ENCODE measurements at regions of chr13 and their contacts with region 1.

Region 1: GRCh38 chr13:27449936-27450828 is at the start of gene MTIF3:
- DNase-seq: peak; percentile 95 to 99 (median 97)
- ATAC-seq: peak; percentile 83 to 90 (median 85)
- H3K4me3 ChIP-seq: peak within 1 kb of the TSS; percentile 95 to 97
- H3K4me3 Mint-ChIP-seq: peak within 1 kb of the TSS; percentile 89 to 95 (median 94)
- H3K27ac ChIP-seq: peak within 1 kb of the TSS; percentile 97
- H3K27ac Mint-ChIP-seq: peak within 1 kb of the TSS; percentile 98 to 99
- H3K4me1 ChIP-seq: peaks cover 31 to 48% of the 10 kb centered on the region in 2 experiments
- H3K4me1 Mint-ChIP-seq: peaks cover 61 to 67% (median 62%) of the 10 kb centered on the region in 3 donors
- H3K27me3 ChIP-seq: no peaks in the 10 kb centered on the region
- H3K27me3 Mint-ChIP-seq: no peaks in the 10 kb centered on the region
- total RNA-seq, gene MTIF3: 45.4 to 74.1 (median 61.4) TPM

Region 2: DNA sequence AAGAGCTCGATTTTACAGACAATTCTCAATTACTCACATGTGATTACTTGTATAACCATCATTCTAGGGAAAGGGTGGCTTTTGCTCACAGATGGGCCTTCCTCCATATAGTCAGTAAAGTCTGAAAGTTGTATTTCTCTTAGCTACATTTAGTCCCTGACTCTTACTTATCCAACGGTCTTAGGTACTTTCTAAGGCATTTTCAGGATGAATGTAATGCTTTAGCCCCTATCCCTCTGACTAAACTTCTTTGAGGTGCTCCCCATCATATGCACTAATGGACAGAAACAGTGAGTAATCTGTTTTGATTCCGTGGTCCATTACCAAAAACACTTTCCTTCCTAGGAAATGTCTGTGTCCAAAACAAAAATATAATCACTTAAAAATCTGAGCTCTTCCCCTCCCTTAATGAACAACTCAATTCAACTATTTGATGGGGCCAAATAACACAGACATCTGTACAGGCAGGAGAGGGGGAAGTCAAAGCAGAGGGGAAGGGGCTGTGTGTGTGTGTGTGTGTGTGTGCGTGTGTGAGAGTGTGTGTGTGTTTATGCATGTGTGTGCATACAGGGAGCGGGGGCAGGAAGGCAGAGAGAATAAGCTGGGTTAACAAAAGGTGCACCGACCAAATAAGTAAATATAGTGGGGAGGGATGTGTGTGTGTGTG is 363.4 kb before region 1 on chr13:
- CTCF ChIA-PET with region 1: no interaction called
- POLR2A ChIA-PET with region 1: interaction called in 1 of 2 experiments, 14 read pairs
- DNase-seq: no peak
- ATAC-seq: no peak
- H3K4me3 ChIP-seq: no peak overlapping the region
- H3K4me3 Mint-ChIP-seq: no peak overlapping the region
- H3K27ac ChIP-seq: no peak overlapping the region
- H3K27ac Mint-ChIP-seq: no peak overlapping the region
- H3K4me1 ChIP-seq: no peaks in the 10 kb centered on the region
- H3K4me1 Mint-ChIP-seq: peaks cover 0 to 7% (median 6%) of the 10 kb centered on the region in 3 donors
- H3K27me3 ChIP-seq: no peaks in the 10 kb centered on the region
- H3K27me3 Mint-ChIP-seq: no peaks in the 10 kb centered on the region

Region 3: GRCh38 chr13:27245610-27246009 is 204.6 kb before region 1 on chr13:
- CTCF ChIA-PET with region 1: interaction called in 1 of 2 experiments, 13 read pairs
- POLR2A ChIA-PET with region 1: no interaction called
- DNase-seq: no peak
- ATAC-seq: no peak
- H3K4me3 ChIP-seq: no peak overlapping the region
- H3K4me3 Mint-ChIP-seq: no peak overlapping the region
- H3K27ac ChIP-seq: no peak overlapping the region
- H3K27ac Mint-ChIP-seq: no peak overlapping the region
- H3K4me1 ChIP-seq: peaks cover 0 to 6% of the 10 kb centered on the region in 2 experiments
- H3K4me1 Mint-ChIP-seq: peaks cover 16 to 22% (median 19%) of the 10 kb centered on the region in 3 donors
- H3K27me3 ChIP-seq: no peaks in the 10 kb centered on the region
- H3K27me3 Mint-ChIP-seq: no peaks in the 10 kb centered on the region

Region 4: DNA sequence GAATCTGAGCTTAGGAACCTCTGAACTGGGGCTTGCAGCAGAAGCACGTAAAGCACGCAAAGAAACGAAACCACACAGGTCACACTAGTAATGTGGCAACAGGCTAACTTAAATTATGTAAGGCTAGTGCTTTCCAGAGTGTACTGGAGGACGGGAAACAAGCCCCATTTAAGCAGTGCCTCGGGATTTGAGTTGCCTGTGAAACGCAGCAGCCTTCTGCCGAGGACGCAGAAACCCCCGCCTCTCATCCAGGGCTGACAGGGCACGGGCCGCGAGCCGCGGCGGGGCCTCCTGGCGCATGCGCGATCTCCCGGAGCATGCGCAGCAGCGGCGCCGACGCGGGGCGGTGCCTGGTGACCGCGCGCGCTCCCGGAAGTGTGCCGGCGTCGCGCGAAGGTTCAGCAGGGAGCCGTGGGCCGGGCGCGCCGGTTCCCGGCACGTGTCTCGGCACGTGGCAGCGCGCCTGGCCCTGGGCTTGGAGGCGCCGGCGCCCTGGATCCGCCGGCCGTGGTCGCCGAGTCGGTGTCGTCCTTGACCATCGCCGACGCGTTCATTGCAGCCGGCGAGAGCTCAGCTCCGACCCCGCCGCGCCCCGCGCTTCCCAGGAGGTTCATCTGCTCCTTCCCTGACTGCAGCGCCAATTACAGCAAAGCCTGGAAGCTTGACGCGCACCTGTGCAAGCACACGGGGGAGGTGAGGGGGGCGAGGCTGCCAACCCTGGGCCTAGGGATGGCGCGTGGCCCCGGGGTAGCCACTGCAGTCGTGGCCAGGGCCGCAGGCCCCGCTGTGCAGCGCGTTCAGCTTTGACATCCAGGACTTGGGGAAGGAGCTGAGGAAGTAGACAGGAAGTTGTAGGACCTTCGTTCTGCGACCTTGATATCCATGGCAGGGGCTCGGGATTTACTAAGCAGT is 25.7 kb before region 1 on chr13 and contains the start of gene GTF3A:
- CTCF ChIA-PET with region 1: interaction called, 25 to 29 read pairs
- POLR2A ChIA-PET with region 1: interaction called, 5 to 11 read pairs
- DNase-seq: peak; percentile 71 to 96 (median 82)
- ATAC-seq: peak; percentile 55 to 74 (median 61)
- H3K4me3 ChIP-seq: peak within 1 kb of the TSS; percentile 72 to 76
- H3K4me3 Mint-ChIP-seq: peak within 1 kb of the TSS; percentile 84 to 87 (median 86)
- H3K27ac ChIP-seq: peak within 1 kb of the TSS; percentile 95
- H3K27ac Mint-ChIP-seq: peak within 1 kb of the TSS; percentile 94 to 98
- H3K4me1 ChIP-seq: peaks cover 30 to 49% of the 10 kb centered on the region in 2 experiments
- H3K4me1 Mint-ChIP-seq: peaks cover 43 to 46% (median 45%) of the 10 kb centered on the region in 3 donors
- H3K27me3 ChIP-seq: no peaks in the 10 kb centered on the region
- H3K27me3 Mint-ChIP-seq: no peaks in the 10 kb centered on the region
- total RNA-seq, gene GTF3A: 144 to 266 (median 229) TPM

Region 5: GRCh38 chr13:27541386-27541785 is 91.2 kb after region 1 on chr13:
- CTCF ChIA-PET with region 1: no interaction called
- POLR2A ChIA-PET with region 1: no interaction called
- DNase-seq: no peak
- ATAC-seq: no peak
- H3K4me3 ChIP-seq: no peak overlapping the region
- H3K4me3 Mint-ChIP-seq: no peak overlapping the region
- H3K27ac ChIP-seq: no peak overlapping the region
- H3K27ac Mint-ChIP-seq: no peak overlapping the region
- H3K4me1 ChIP-seq: no peaks in the 10 kb centered on the region
- H3K4me1 Mint-ChIP-seq: peaks cover 0 to 4% (median 0%) of the 10 kb centered on the region in 3 donors
- H3K27me3 ChIP-seq: no peaks in the 10 kb centered on the region
- H3K27me3 Mint-ChIP-seq: no peaks in the 10 kb centered on the region

Region 6: DNA sequence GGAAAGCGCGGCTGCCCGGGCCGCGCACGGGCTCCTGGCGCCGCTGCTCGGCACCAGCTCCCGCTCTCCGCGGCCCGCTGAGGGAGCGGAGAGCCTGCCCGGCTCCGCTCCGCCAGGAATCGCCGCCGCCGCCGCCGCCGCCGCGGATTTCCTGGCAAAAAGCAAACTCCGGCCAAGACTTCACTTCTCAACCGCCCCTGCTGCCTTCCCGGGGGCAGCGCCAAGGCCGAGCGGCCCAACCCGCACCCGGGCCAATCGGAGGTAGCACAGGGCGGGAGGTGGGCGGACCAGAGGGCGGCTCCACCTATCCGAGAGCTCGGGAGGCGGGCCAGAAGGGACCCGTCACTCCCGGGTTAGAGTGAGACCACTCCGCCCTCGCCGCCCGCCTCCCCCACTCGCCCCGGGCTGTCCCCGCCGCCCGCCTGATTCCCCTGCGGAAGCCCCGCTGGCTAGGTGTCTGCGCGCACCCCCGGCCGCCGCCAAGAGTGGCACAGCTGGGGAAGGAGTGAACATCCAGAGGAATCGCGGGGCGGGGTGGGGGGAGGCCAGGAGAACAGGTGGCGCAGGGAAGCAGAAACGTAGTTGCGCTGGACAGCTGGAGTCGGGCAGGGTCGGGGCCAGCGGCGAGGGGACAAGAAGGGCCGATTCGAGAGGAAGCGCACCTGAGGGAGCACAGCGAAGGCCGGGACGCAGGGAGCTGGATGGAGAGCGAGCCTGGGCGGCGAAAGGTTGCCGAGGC is 170.4 kb after region 1 on chr13 and contains the start of gene LNX2:
- CTCF ChIA-PET with region 1: interaction called, 3 to 6 read pairs
- POLR2A ChIA-PET with region 1: interaction called in 1 of 2 experiments, 10 read pairs
- DNase-seq: peak; percentile 86 to 98 (median 94)
- ATAC-seq: peak; percentile 83 to 86 (median 84)
- H3K4me3 ChIP-seq: peak within 1 kb of the TSS; percentile 91 to 92
- H3K4me3 Mint-ChIP-seq: peak within 1 kb of the TSS; percentile 91 to 94 (median 93)
- H3K27ac ChIP-seq: peak within 1 kb of the TSS; percentile 96
- H3K27ac Mint-ChIP-seq: peak within 1 kb of the TSS; percentile 92 to 96
- H3K4me1 ChIP-seq: peaks cover 21 to 24% of the 10 kb centered on the region in 2 experiments
- H3K4me1 Mint-ChIP-seq: peaks cover 62 to 68% (median 67%) of the 10 kb centered on the region in 3 donors
- H3K27me3 ChIP-seq: no peaks in the 10 kb centered on the region
- H3K27me3 Mint-ChIP-seq: no peaks in the 10 kb centered on the region
- total RNA-seq, gene LNX2: 5.0 to 11.8 (median 9.8) TPM

Measured in T-cell (primary cell).